IMR-90 (cell line): ENCODE measurements at regions of chr2 and their contacts with region 1.

Region 1: GRCh38 chr2:99725820-99726219 is 236.0 kb upstream of the REV1 start:
- DNase-seq: peak; percentile 28
- ATAC-seq: no peak
- H3K4me3 ChIP-seq: no peak overlapping the region
- H3K27ac ChIP-seq: no peak overlapping the region; the same call in 1 of the 2 replicates
- H3K4me1 ChIP-seq: peaks cover 16% of the 10 kb centered on the region
- H3K27me3 ChIP-seq: no peaks in the 10 kb centered on the region
- CTCF ChIP-seq: peak; percentile 59
- POLR2A ChIP-seq: no peak
- RAD21 ChIP-seq: peak; percentile 69

Region 2: DNA sequence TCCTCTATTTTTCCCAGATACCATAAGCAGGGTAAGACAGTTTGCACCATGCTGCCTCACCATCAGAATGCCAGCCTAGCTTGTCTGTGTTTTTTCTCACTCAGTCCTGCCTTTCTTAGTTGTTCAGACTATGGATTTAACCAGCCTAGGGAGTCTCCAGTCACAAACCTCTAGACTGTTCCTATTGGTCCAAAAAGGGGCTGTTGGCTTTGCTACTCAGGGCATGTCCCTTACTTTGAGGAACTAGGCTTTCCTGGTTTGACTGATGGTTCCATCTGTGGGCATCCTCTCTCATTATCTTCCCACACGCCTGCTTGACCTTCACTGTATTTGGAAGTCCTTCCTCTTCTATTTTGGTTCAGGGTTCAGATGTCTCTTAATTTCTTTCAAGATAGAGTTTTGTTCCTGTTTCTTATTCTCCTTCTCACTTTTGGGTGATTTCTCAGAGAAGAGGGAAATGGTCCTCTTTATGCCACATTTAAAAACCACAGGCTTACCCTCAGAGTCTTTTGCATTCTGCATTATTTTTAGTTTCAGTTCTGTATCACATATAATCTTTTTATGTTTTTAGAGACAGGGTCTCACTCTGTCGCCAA is 1698.8 kb before region 1 on chr2:
- CTCF ChIA-PET with region 1: no interaction called
- POLR2A ChIA-PET with region 1: no interaction called
- dilution Hi-C with region 1: no loop called
- in situ Hi-C with region 1: no loop called
- intact Hi-C with region 1: no loop called
- DNase-seq: no peak
- ATAC-seq: no peak
- H3K4me3 ChIP-seq: no peak overlapping the region
- H3K27ac ChIP-seq: no peak overlapping the region
- H3K4me1 ChIP-seq: no peaks in the 10 kb centered on the region
- H3K27me3 ChIP-seq: peaks cover 2% of the 10 kb centered on the region; the same call in 1 of the 2 replicates
- CTCF ChIP-seq: no peak
- POLR2A ChIP-seq: no peak
- RAD21 ChIP-seq: no peak

Region 3: DNA sequence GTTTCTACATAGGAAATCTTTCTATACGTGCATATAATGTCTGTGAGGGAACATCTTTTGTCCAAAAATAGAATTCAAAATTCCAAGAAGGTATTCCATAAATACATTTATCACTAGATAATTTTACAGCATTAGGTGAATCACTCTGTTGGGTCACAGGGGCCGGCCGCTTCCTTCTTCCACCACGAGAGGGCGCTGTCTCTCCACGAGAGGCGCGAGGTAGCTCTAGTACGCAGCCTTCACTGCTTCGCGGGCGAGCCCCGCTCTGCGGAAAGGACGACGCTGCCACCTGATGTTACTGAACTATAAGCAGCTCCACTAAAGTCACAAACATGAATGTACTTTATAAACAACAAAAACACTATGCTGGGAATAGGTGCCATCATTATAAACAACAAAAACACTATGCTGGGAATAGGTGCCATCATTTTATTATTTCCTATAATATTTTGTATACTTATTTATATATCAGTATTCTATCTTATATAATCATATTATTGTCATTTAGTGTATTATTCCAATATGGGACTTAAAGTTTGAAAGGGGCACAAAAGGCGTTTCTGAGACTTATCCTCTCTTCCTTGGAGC is 166.7 kb before region 1 on chr2:
- CTCF ChIA-PET with region 1: interaction called, 4 read pairs
- POLR2A ChIA-PET with region 1: no interaction called
- dilution Hi-C with region 1: no loop called
- in situ Hi-C with region 1: no loop called
- intact Hi-C with region 1: loop called (anchors 5 kb)
- DNase-seq: peak; percentile 67
- ATAC-seq: peak; percentile 99
- H3K4me3 ChIP-seq: no peak overlapping the region
- H3K27ac ChIP-seq: no peak overlapping the region
- H3K4me1 ChIP-seq: no peaks in the 10 kb centered on the region
- H3K27me3 ChIP-seq: no peaks in the 10 kb centered on the region
- CTCF ChIP-seq: peak; percentile 97
- POLR2A ChIP-seq: no peak
- RAD21 ChIP-seq: peak; percentile 99

Region 4: DNA sequence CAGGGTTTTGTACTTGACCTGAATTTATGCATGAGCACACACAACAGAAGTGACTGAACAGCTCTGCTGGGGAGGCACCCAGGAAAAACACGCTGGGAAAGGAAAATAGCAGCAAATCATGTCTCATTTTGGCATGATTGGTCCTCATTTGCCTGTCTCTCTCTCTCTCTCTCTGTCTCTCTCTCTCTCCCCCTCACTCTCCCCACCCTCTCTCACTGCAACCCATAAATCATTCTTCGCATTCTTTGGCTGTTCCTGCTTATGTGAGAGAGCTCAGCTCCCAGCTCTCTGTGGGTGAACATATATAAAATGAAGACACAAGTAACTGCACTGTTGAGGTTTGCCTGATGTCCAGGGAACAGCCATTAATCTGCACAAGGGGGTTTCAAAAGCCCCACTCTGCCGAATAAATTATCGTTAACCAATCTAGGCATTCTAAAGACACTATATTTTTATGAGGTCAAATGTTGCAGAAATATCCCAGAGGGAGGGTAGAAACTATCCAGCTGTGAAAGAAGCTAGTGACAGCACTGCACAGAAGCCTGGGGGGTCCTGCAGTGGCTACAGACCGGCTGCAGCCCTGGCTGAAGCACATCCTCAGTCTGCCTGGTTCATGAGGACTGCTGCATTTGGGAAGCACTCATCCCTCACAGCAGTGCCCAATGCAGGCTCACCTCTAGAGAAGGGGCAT is 156.2 kb after region 1 on chr2:
- CTCF ChIA-PET with region 1: no interaction called
- POLR2A ChIA-PET with region 1: no interaction called
- dilution Hi-C with region 1: no loop called
- in situ Hi-C with region 1: no loop called
- intact Hi-C with region 1: loop called (anchors 5 kb)
- DNase-seq: peak; percentile 95
- ATAC-seq: peak; percentile 46
- H3K4me3 ChIP-seq: no peak overlapping the region
- H3K27ac ChIP-seq: peak overlapping the region; percentile 86
- H3K4me1 ChIP-seq: peaks cover 22% of the 10 kb centered on the region
- H3K27me3 ChIP-seq: no peaks in the 10 kb centered on the region
- CTCF ChIP-seq: no peak
- POLR2A ChIP-seq: peak; percentile 57
- RAD21 ChIP-seq: peak; percentile 30; the same call in 1 of the 2 replicates